B cell (primary cell): ENCODE measurements at regions of chr10 and their contacts with region 1.

Region 1: DNA sequence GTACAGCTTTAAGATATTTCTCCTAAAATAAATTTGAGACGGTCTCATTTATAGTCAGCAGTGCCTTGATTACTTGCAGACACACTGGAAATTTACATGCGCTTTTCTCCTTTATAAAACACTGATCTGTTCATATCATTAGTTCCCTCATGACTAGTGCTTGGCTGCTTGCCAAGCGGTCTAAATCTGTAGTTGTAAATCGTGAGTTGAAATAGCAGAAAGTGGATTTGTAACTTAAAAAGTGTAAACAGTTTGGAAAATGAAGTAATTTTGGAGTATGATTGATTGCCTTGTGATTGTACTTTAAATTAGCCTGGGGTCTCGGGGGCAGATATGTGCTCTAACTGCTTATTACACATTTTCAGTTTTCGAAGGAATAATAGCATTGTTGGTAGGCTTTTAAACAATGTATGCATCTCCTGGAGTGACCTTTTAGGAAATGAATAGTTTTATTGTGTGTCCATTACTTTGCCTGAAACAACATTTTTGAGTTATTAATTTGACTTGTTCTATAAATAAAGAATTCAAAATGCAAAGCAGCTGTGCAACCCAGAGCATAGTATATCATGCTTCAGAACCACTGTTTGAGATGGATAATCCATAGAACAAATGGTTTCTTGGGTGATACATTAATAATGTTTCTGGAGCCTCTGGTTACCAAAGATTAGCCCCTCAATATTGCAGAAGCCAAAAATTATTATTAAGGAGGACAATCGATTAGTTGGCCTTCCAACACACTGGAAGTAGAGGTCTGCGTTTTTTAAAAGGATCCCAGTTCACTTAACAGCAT is 73.3 kb downstream of the ARID5B start:
- DNase-seq: peak; percentile 47
- ATAC-seq: no peak
- H3K4me3 ChIP-seq: no peak overlapping the region
- H3K4me3 Mint-ChIP-seq: peak overlapping the region; percentile 47
- H3K27ac ChIP-seq: peak overlapping the region in 1 of 2 donors; percentile 53
- H3K27ac Mint-ChIP-seq: peak overlapping the region; percentile 80
- H3K4me1 ChIP-seq: peaks cover 35 to 50% of the 10 kb centered on the region in 2 donors
- H3K4me1 Mint-ChIP-seq: peaks cover 79% of the 10 kb centered on the region
- H3K27me3 ChIP-seq: no peaks in the 10 kb centered on the region
- H3K27me3 Mint-ChIP-seq: no peaks in the 10 kb centered on the region
- CTCF ChIP-seq: no peak

Region 2: DNA sequence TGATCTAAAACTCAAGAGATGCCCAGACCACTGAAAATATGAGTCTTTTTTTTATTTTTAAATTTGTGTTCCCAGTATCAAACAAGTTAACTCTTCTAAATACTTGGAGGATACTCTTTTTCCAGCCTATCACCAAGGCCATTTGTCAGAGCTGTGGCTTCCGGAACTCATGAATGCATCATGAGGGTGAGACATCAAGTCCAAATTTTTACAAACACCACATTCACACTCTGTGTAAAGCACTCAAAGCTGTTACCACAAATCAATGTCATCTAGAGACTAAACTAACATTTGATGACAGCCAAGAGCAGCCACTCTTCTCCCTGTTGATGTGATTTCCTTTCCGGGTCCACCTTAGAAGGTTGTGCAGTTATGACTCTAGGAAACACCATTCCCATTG is 117.0 kb before region 1 on chr10:
- CTCF ChIA-PET with region 1: no interaction called
- POLR2A ChIA-PET with region 1: no interaction called
- intact Hi-C with region 1: no loop called
- DNase-seq: no peak
- ATAC-seq: no peak
- H3K4me3 ChIP-seq: no peak overlapping the region
- H3K4me3 Mint-ChIP-seq: no peak overlapping the region
- H3K27ac ChIP-seq: no peak overlapping the region
- H3K27ac Mint-ChIP-seq: no peak overlapping the region
- H3K4me1 ChIP-seq: no peaks in the 10 kb centered on the region
- H3K4me1 Mint-ChIP-seq: no peaks in the 10 kb centered on the region
- H3K27me3 ChIP-seq: no peaks in the 10 kb centered on the region
- H3K27me3 Mint-ChIP-seq: no peaks in the 10 kb centered on the region
- CTCF ChIP-seq: no peak

Region 3: DNA sequence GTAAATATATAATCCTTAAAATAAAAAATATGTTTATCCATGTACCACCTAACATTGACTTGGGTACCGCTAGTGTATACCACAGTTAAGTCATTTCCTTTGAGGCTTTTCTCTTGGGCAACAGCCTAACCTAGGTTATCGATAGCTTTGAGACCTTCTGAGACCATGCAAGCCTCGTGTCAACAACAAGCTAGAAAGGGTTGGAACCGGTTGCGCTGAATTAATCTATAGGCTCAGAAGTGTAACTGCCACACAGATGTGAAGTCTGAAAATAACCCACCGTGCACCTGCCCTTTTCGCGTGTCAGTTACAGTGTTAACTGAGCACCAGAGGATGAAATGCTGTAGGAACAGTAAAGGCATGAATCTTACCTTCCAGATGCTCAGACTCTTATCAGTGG is 13.5 kb before region 1 on chr10:
- CTCF ChIA-PET with region 1: interaction called, 4 read pairs
- POLR2A ChIA-PET with region 1: no interaction called
- intact Hi-C with region 1: loop called (anchors 1 kb)
- DNase-seq: peak; percentile 63
- ATAC-seq: peak; percentile 51
- H3K4me3 ChIP-seq: peak overlapping the region in 1 of 5 experiments; percentile 3
- H3K4me3 Mint-ChIP-seq: peak overlapping the region; percentile 42
- H3K27ac ChIP-seq: peak overlapping the region; percentile 68 to 69
- H3K27ac Mint-ChIP-seq: peak overlapping the region; percentile 82
- H3K4me1 ChIP-seq: peaks cover 79 to 86% of the 10 kb centered on the region in 2 donors
- H3K4me1 Mint-ChIP-seq: peaks cover 85% of the 10 kb centered on the region
- H3K27me3 ChIP-seq: no peaks in the 10 kb centered on the region
- H3K27me3 Mint-ChIP-seq: no peaks in the 10 kb centered on the region
- CTCF ChIP-seq: no peak

Region 4: DNA sequence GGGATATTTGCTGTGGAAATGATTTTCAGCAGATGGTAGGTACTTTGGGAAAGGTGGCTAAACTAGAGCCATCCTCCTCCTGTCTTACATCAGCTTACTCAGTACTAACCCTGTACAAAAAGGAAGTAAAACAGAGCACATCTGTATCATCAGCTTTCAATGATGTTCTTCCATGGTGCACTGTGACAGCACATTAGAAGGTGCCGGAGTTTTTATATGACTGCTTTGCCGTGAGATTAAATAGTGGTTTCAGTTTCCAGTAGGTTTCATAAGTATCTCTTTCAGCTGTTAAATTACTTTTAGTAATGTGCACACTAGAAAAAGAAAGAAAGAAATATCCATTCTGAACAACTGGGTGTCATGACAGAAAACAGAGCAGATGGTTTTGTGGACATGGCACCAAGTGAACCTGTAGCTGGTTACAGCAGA is 13.2 kb after region 1 on chr10:
- CTCF ChIA-PET with region 1: interaction called, 4 read pairs
- POLR2A ChIA-PET with region 1: interaction called, 3 read pairs
- intact Hi-C with region 1: loop called (anchors 1 kb)
- DNase-seq: peak; percentile 88
- ATAC-seq: peak; percentile 82
- H3K4me3 ChIP-seq: peak overlapping the region in 1 of 5 experiments; percentile 29
- H3K4me3 Mint-ChIP-seq: peak overlapping the region; percentile 88
- H3K27ac ChIP-seq: peak overlapping the region; percentile 84 to 88
- H3K27ac Mint-ChIP-seq: peak overlapping the region; percentile 99
- H3K4me1 ChIP-seq: peaks cover 47 to 61% of the 10 kb centered on the region in 2 donors
- H3K4me1 Mint-ChIP-seq: peaks cover 82% of the 10 kb centered on the region
- H3K27me3 ChIP-seq: no peaks in the 10 kb centered on the region
- H3K27me3 Mint-ChIP-seq: no peaks in the 10 kb centered on the region
- CTCF ChIP-seq: no peak

Region 5: GRCh38 chr10:62071846-62072281 is 97.1 kb after region 1 on chr10:
- CTCF ChIA-PET with region 1: no interaction called
- POLR2A ChIA-PET with region 1: no interaction called
- intact Hi-C with region 1: no loop called
- DNase-seq: no peak
- ATAC-seq: no peak
- H3K4me3 ChIP-seq: no peak overlapping the region
- H3K4me3 Mint-ChIP-seq: no peak overlapping the region
- H3K27ac ChIP-seq: peak overlapping the region in 1 of 2 donors; percentile 14
- H3K27ac Mint-ChIP-seq: peak overlapping the region; percentile 65
- H3K4me1 ChIP-seq: peaks cover 4 to 11% of the 10 kb centered on the region in 2 donors
- H3K4me1 Mint-ChIP-seq: peaks cover 58% of the 10 kb centered on the region
- H3K27me3 ChIP-seq: no peaks in the 10 kb centered on the region
- H3K27me3 Mint-ChIP-seq: no peaks in the 10 kb centered on the region
- CTCF ChIP-seq: no peak

Region 6: DNA sequence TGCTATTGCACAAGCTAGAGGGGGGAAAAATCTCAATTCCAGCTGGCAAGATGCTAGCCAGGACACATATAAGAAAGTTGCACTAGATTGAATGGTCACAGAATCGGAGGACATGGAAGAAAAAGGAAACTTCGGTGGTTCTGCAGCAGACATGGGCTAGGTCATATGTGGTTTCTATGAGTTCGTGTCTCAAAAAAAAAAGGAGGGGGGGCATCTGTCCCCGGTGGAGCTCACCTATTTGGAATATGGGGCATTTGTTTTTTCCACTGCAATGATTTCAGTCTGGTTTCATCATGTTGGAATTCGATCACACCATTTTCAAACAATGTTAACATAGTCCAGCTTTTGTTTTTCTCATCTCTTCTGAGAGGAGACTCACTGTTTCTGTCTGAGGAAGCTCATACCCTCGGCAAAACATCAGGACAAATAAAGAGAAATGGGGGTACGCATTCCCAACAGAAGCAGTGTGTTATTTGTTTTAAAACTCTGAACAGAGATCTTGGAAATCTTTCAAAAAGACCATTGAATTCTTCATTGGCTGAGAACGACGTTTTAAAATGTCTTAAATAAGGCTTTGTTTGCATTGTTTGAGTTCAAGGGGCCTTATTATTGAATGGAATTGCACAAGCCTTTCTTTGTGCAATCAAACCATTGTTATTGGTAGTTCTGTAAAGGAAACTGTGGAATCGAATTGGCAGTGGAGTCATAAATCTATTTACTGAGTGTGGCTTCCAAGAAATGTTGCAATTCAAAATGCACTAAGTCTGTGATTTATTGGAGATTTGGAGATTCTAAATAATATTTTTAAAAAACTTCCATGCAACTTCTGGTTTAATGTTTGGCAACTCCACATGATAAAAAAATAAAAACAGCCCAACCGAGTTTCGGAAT is 120.6 kb after region 1 on chr10:
- CTCF ChIA-PET with region 1: no interaction called
- POLR2A ChIA-PET with region 1: no interaction called
- intact Hi-C with region 1: no loop called
- DNase-seq: no peak
- ATAC-seq: no peak
- H3K4me3 ChIP-seq: no peak overlapping the region
- H3K4me3 Mint-ChIP-seq: no peak overlapping the region
- H3K27ac ChIP-seq: no peak overlapping the region
- H3K27ac Mint-ChIP-seq: peak overlapping the region; percentile 66
- H3K4me1 ChIP-seq: peaks cover 0 to 3% of the 10 kb centered on the region in 2 donors
- H3K4me1 Mint-ChIP-seq: peaks cover 23% of the 10 kb centered on the region
- H3K27me3 ChIP-seq: no peaks in the 10 kb centered on the region
- H3K27me3 Mint-ChIP-seq: no peaks in the 10 kb centered on the region
- CTCF ChIP-seq: no peak